CD8-positive, alpha-beta T cell (primary cell): ENCODE measurements at regions of chr7 and their contacts with region 1.

Region 1: DNA sequence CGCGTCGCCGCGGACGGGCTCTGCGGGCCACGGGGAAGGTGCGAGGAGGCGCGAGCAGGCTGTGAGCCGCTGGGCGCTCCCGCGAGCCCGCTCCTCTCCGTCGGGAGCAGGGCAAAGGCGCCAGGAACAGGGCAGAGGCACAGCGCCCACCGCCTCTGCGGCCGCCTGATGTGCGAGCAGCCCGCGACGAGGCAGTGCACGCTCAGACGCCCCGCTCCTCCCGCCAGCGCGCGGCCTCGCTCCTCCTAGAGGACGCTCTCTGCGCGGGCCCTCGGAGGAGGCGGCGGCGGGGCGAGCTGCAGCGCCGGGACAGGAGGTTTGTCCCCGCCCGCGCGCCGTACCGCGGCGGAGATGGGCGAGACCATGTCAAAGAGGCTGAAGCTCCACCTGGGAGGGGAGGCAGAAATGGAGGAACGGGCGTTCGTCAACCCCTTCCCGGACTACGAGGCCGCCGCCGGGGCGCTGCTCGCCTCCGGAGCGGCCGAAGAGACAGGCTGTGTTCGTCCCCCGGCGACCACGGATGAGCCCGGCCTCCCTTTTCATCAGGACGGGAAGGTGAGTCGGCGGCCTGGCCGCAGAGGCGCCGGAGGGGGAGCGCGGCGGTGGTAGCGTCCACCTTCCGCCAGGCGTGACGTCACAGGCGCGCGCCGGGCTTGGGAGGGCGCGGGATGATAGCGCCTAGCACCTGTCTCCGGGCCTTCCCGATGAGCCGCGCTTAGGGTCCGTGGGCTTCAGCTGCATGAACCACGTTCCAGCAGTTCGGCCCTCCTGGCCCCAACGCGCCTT is 731 bp downstream of the LANCL2 start:
- DNase-seq: peak; percentile 87 to 98 (median 93)
- ATAC-seq: peak; percentile 86
- H3K4me3 ChIP-seq: peak overlapping the region; percentile 92 to 96
- H3K4me3 Mint-ChIP-seq: peak overlapping the region; percentile 96
- H3K27ac ChIP-seq: peak overlapping the region; percentile 96 to 97
- H3K27ac Mint-ChIP-seq: peak overlapping the region; percentile 99
- H3K4me1 ChIP-seq: peaks cover 27% of the 10 kb centered on the region
- H3K4me1 Mint-ChIP-seq: peaks cover 35% of the 10 kb centered on the region
- H3K27me3 ChIP-seq: no peaks in the 10 kb centered on the region
- H3K27me3 Mint-ChIP-seq: no peaks in the 10 kb centered on the region
- CTCF ChIP-seq: no peak

Region 2: DNA sequence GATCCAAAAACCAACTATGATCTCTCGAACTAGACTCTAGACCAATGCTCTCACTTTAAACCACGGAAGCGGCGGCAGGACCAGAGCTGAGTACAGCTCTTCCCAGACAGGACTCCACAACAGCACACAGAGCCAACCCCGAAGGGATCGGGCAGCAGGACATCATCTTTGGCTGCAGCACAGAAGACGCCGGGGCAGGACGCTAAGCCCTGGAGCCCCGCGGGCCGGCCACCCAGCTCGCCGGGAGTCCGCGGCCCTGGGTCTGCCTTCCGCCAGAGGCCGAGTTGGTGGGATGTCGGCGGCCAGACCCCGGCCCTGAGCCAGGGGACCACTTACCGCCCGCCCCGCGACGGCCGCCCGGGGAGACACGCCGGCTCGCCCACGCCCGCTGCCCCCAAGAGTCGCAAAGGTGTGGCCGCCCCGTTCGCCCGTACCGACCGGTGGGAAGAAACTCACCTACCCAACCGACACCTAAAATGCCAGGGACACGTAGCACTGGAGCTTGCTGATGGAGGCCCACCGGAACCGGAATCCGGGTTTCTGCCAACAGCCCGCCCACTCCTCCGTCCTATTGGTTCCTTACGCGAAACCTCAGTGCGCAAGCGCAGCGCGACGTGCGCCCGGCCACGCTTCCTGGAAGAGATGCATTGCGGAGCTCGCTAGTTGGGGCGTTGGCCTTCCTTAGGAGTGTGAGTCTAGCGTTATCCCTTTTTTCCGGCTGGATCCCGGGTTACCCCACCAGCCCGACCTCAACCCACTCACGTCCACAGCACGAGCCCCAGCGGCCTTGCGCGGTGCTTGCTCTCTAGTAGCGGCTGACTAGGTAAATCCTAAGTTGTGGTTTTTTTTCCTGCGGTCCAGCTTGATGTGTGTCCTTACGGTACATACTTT is 606.9 kb before region 1 on chr7 and contains the start of gene SEC61G:
- CTCF ChIA-PET with region 1: no interaction called
- POLR2A ChIA-PET with region 1: interaction called, 13 read pairs
- intact Hi-C with region 1: loop called (anchors 1 kb)
- DNase-seq: peak; percentile 87 to 98 (median 95)
- ATAC-seq: peak; percentile 97
- H3K4me3 ChIP-seq: peak within 1 kb of the TSS; percentile 78 to 96
- H3K4me3 Mint-ChIP-seq: peak within 1 kb of the TSS; percentile 100
- H3K27ac ChIP-seq: peak within 1 kb of the TSS; percentile 74 to 90
- H3K27ac Mint-ChIP-seq: peak within 1 kb of the TSS; percentile 97
- H3K4me1 ChIP-seq: peaks cover 21% of the 10 kb centered on the region
- H3K4me1 Mint-ChIP-seq: peaks cover 46% of the 10 kb centered on the region
- H3K27me3 ChIP-seq: no peaks in the 10 kb centered on the region
- H3K27me3 Mint-ChIP-seq: peaks cover 3% of the 10 kb centered on the region
- CTCF ChIP-seq: no peak
- total RNA-seq, gene SEC61G: 50.5 to 58.0 TPM

Region 3: GRCh38 chr7:55309040-55309991 is 56.6 kb before region 1 on chr7:
- CTCF ChIA-PET with region 1: interaction called, 6 read pairs
- POLR2A ChIA-PET with region 1: interaction called, 22 read pairs
- intact Hi-C with region 1: loop called in 1 of 2 experiments (anchors 1 kb)
- DNase-seq: peak; percentile 19 to 93 (median 56)
- ATAC-seq: peak; percentile 89
- H3K4me3 ChIP-seq: no peak overlapping the region
- H3K4me3 Mint-ChIP-seq: no peak overlapping the region
- H3K27ac ChIP-seq: peak overlapping the region; percentile 40 to 66
- H3K27ac Mint-ChIP-seq: peak overlapping the region; percentile 89
- H3K4me1 ChIP-seq: peaks cover 15% of the 10 kb centered on the region
- H3K4me1 Mint-ChIP-seq: peaks cover 28% of the 10 kb centered on the region
- H3K27me3 ChIP-seq: peaks cover 0 to 4% of the 10 kb centered on the region in 2 experiments
- H3K27me3 Mint-ChIP-seq: peaks cover 2% of the 10 kb centered on the region
- CTCF ChIP-seq: no peak

Region 4: GRCh38 chr7:55348499-55348898 is 17.4 kb before region 1 on chr7:
- CTCF ChIA-PET with region 1: no interaction called
- POLR2A ChIA-PET with region 1: no interaction called
- intact Hi-C with region 1: no loop called
- DNase-seq: no peak
- ATAC-seq: no peak
- H3K4me3 ChIP-seq: no peak overlapping the region
- H3K4me3 Mint-ChIP-seq: no peak overlapping the region
- H3K27ac ChIP-seq: no peak overlapping the region
- H3K27ac Mint-ChIP-seq: no peak overlapping the region
- H3K4me1 ChIP-seq: no peaks in the 10 kb centered on the region
- H3K4me1 Mint-ChIP-seq: peaks cover 4% of the 10 kb centered on the region
- H3K27me3 ChIP-seq: no peaks in the 10 kb centered on the region
- H3K27me3 Mint-ChIP-seq: peaks cover 12% of the 10 kb centered on the region
- CTCF ChIP-seq: no peak

Region 5: GRCh38 chr7:55415173-55415778 is 49.4 kb after region 1 on chr7:
- CTCF ChIA-PET with region 1: no interaction called
- POLR2A ChIA-PET with region 1: interaction called, 5 read pairs
- intact Hi-C with region 1: loop called (anchors 1 to 5 kb)
- DNase-seq: peak; percentile 61 to 86 (median 84)
- ATAC-seq: peak; percentile 100
- H3K4me3 ChIP-seq: no peak overlapping the region
- H3K4me3 Mint-ChIP-seq: no peak overlapping the region
- H3K27ac ChIP-seq: no peak overlapping the region
- H3K27ac Mint-ChIP-seq: no peak overlapping the region
- H3K4me1 ChIP-seq: no peaks in the 10 kb centered on the region
- H3K4me1 Mint-ChIP-seq: no peaks in the 10 kb centered on the region
- H3K27me3 ChIP-seq: no peaks in the 10 kb centered on the region
- H3K27me3 Mint-ChIP-seq: no peaks in the 10 kb centered on the region
- CTCF ChIP-seq: peak; percentile 94

Region 6: DNA sequence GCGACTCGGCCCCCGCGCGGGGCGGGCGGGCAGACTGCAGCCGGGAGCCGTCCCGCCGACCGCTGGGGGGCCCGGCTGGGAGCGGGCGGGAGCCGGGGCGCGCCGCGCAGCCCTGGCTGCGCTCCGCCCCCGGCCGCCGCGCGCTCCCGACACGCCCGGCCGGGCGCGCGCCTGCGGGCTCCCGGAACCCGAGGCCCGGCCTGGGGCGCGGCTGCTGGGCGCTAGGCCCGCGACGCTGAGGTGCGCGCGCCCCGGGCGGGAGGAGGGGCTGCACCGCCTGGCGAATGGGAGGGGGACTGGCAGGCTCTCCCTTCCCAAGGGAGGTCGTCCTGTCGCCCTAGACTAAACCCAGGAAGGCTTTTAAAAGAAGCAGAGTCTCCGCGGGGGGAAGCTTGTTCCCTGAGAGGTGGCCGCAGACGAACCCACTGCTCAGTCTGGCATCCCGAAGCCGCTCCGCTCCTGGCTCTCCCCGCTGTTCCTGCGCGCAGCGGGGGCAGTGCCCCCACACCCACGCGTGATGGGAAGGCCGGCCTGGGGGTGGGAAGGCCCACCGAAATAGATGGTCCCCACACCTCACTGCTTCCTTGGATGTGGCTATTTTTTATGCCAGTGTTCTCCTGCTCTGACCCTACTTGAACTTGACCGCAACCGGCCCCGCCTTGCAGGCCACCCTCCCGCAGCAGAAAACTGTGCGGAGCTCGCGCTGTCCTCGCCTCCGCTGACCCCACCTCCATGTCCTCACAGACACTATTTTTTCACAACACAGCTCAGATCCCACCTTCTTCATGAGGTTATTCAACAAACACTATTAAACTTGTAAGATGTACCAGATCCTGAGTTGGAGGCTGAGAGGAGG is 206.7 kb after region 1 on chr7 and contains the start of gene VOPP1:
- CTCF ChIA-PET with region 1: no interaction called
- POLR2A ChIA-PET with region 1: interaction called, 13 read pairs
- intact Hi-C with region 1: loop called (anchors 1 to 2 kb)
- DNase-seq: peak; percentile 25 to 88 (median 57)
- ATAC-seq: peak; percentile 44
- H3K4me3 ChIP-seq: peak within 1 kb of the TSS; percentile 74 to 80
- H3K4me3 Mint-ChIP-seq: peak within 1 kb of the TSS; percentile 92
- H3K27ac ChIP-seq: peak within 1 kb of the TSS; percentile 66 to 80
- H3K27ac Mint-ChIP-seq: peak within 1 kb of the TSS; percentile 91
- H3K4me1 ChIP-seq: peaks cover 48% of the 10 kb centered on the region
- H3K4me1 Mint-ChIP-seq: peaks cover 56% of the 10 kb centered on the region
- H3K27me3 ChIP-seq: no peaks in the 10 kb centered on the region
- H3K27me3 Mint-ChIP-seq: no peaks in the 10 kb centered on the region
- CTCF ChIP-seq: no peak
- total RNA-seq, gene VOPP1: 38.7 to 38.9 TPM

Region 7: DNA sequence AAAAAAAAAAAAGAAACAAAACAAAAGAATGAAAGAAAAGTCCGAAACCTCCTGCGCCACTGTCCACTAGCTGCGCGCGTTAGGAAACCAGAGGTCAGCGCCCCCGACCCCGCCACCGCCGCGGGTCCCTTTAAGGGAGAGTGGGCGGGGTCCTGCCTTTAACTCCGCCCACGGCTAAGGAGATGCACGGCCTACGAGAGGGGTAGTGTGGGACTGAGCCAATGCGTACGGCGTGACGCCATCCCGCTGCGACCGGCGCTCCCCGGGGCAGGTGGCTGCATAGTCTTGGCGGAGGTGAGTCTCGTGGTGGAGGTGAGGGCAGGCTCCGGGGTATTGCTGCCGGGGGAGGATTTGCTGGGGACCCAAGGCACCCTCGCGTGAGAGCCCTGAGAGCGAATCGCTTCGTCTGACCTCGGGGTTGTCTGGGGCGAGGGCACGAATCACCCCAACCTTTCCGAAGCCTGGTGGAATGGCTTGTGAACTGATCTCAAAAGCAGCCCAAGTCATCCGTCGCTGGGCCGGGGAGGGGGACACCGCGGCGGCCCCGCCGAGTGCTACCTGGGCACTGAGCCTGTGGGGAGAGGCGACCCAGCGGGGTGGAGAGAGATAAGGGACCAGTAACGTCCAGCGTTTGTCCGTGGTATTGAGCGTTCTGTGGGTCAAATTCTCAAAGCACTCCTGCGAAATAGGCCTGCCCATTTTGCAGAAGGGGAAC is 585.9 kb after region 1 on chr7 and contains the start of gene MRPS17:
- CTCF ChIA-PET with region 1: no interaction called
- POLR2A ChIA-PET with region 1: no interaction called
- intact Hi-C with region 1: loop called (anchors 1 to 2 kb)
- DNase-seq: peak; percentile 82 to 96 (median 93)
- ATAC-seq: peak; percentile 99
- H3K4me3 ChIP-seq: peak within 1 kb of the TSS; percentile 71 to 86
- H3K4me3 Mint-ChIP-seq: peak within 1 kb of the TSS; percentile 94
- H3K27ac ChIP-seq: peak within 1 kb of the TSS; percentile 78 to 91
- H3K27ac Mint-ChIP-seq: peak within 1 kb of the TSS; percentile 97
- H3K4me1 ChIP-seq: peaks cover 6% of the 10 kb centered on the region
- H3K4me1 Mint-ChIP-seq: peaks cover 26% of the 10 kb centered on the region
- H3K27me3 ChIP-seq: no peaks in the 10 kb centered on the region
- H3K27me3 Mint-ChIP-seq: no peaks in the 10 kb centered on the region
- CTCF ChIP-seq: no peak
- total RNA-seq, gene MRPS17: 7.8 to 8.9 TPM

Region 8: GRCh38 chr7:56063882-56064625 is 698.2 kb after region 1 on chr7 and contains the start of gene SUMF2:
- CTCF ChIA-PET with region 1: no interaction called
- POLR2A ChIA-PET with region 1: interaction called, 3 read pairs
- intact Hi-C with region 1: loop called in 1 of 2 experiments (anchors 5 kb)
- DNase-seq: peak; percentile 80 to 95 (median 90)
- ATAC-seq: peak; percentile 90
- H3K4me3 ChIP-seq: peak within 1 kb of the TSS; percentile 79 to 99
- H3K4me3 Mint-ChIP-seq: peak within 1 kb of the TSS; percentile 91
- H3K27ac ChIP-seq: peak within 1 kb of the TSS; percentile 86 to 88
- H3K27ac Mint-ChIP-seq: peak within 1 kb of the TSS; percentile 91
- H3K4me1 ChIP-seq: peaks cover 22% of the 10 kb centered on the region
- H3K4me1 Mint-ChIP-seq: peaks cover 28% of the 10 kb centered on the region
- H3K27me3 ChIP-seq: no peaks in the 10 kb centered on the region
- H3K27me3 Mint-ChIP-seq: no peaks in the 10 kb centered on the region
- CTCF ChIP-seq: no peak
- total RNA-seq, gene SUMF2: 97.8 to 103 TPM